Naive thymus-derived CD8-positive, alpha-beta T cell (primary cell): ENCODE measurements at regions of chr13 and their contacts with region 1.

Region 1: GRCh38 chr13:75760131-75761021 is 124.2 kb downstream of the LMO7 start:
- DNase-seq: peak in 6 of 10 donors; percentile 9 to 51 (median 24)
- ATAC-seq: peak; percentile 70 to 79
- H3K4me3 Mint-ChIP-seq: peak overlapping the region; percentile 83 to 92 (median 88)
- H3K27ac Mint-ChIP-seq: peak overlapping the region; percentile 90 to 99 (median 95)
- H3K4me1 Mint-ChIP-seq: peaks cover 33 to 85% (median 57%) of the 10 kb centered on the region in 4 donors
- H3K27me3 Mint-ChIP-seq: no peaks in the 10 kb centered on the region

Region 2: DNA sequence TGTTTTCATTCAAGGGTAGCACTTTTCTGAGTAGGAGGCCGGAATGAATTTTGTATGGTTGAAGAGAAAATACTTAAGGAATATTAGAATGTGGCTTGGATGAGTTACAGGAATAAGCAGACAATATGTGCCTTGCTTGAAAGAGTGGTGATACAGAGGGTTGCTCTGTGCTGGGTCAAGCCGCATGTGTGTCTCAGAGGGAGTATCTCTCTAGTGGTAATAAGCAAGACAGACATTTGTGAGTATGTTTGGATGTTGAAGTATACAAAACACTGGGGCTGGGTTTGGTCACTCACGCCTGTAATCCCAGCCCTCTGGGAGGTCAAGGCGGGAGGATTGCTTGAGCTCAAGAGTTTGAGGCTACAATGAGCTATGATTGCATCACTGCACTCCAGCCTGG is 20.3 kb before region 1 on chr13:
- POLR2A ChIA-PET with region 1: no interaction called
- DNase-seq: no peak
- ATAC-seq: no peak
- H3K4me3 Mint-ChIP-seq: no peak overlapping the region
- H3K27ac Mint-ChIP-seq: no peak overlapping the region
- H3K4me1 Mint-ChIP-seq: peaks cover 0 to 2% (median 0%) of the 10 kb centered on the region in 4 donors
- H3K27me3 Mint-ChIP-seq: no peaks in the 10 kb centered on the region

Region 3: DNA sequence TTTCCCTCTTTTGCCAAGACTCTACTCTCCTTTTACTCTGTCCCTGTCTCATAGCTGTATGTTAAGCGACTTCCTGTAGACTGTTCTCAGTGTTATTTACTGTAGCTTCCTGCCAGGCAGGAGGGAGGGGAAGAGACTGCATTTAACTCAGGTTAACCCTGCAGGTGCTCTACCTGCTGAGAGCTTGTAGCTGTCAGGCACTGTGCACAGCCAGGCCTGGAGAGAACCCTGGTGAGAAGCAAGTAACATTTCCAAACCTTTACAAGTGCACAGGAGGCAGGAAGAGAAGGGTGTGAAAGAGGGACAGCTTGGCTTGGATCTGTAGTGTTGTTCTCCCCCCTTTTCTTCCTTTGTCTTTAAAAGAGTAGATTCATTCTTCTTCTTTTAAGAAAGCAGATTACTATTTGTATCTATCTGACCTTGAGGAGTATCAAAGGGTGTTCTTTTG is 42.8 kb after region 1 on chr13:
- POLR2A ChIA-PET with region 1: interaction called, 39 read pairs
- DNase-seq: peak in 8 of 10 donors; percentile 3 to 66 (median 32)
- ATAC-seq: peak; percentile 100
- H3K4me3 Mint-ChIP-seq: peak overlapping the region; percentile 20 to 77 (median 52)
- H3K27ac Mint-ChIP-seq: peak overlapping the region; percentile 54 to 92 (median 88)
- H3K4me1 Mint-ChIP-seq: peaks cover 14 to 38% (median 28%) of the 10 kb centered on the region in 4 donors
- H3K27me3 Mint-ChIP-seq: no peaks in the 10 kb centered on the region